ENCODE measurements at regions of chr16 and their contacts with region 1.

Region 1: GRCh38 chr16:31382485-31383161 is 10.5 kb upstream of the ITGAD start:
- DNase-seq: peak; percentile 81
- ATAC-seq: peak; percentile 55
- H3K4me3 Mint-ChIP-seq: no peak overlapping the region
- H3K27ac Mint-ChIP-seq: no peak overlapping the region
- H3K4me1 Mint-ChIP-seq: peaks cover 25% of the 10 kb centered on the region
- H3K27me3 Mint-ChIP-seq: peaks cover 3% of the 10 kb centered on the region
- CTCF ChIP-seq: peak; percentile 91

Region 2: DNA sequence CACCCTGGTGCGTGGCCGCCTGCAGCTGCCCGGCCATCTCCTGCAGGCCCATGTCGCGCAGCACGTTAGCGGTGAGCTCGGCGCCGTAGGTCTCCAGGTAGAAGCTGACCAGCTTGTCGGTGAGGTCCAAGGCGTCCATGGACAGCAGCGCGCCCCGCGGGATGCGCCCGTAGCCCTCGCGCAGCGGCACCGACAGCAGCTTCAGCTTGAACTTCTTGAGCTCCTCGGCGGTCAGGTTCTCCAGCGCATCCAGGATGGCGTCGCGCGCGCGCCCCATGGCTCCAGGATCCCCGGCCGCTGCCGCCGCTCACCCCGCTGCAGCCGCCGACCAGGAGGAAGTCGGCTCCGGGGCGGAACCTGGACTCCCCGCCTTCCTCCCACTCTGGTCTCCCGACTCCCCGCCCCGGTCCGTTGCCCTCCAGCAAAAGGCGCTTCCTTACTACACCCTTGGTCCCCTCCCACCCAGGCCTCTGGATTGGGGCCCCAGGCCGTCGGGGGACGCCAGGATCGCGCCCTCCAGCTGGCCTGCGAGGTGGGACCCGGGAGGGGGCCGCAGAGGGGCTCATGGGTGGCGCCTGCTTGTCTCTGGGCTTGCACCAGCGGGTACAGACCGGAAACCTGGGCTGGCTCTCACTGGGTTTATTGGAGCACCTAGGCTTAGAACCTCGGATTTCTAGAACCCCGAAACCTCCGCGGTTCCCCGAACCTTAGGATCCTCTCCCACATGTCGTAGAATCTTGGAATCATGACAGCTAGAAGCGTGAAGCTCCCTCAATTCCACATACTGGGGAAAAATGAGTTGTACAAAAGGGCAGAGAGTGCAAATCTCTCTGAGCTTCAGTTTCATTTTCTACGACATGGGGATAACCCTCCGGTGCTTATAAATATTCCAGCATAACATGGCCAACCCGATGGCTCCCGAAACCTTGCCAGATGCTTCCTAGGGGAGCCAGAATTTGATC is 179.9 kb before region 1 on chr16 and contains the start of gene PYCARD:
- CTCF ChIA-PET with region 1: interaction called, 12 read pairs
- POLR2A ChIA-PET with region 1: interaction called, 6 read pairs
- intact Hi-C with region 1: no loop called
- DNase-seq: peak; percentile 45
- ATAC-seq: peak; percentile 24
- H3K4me3 Mint-ChIP-seq: peak within 1 kb of the TSS; percentile 75
- H3K27ac Mint-ChIP-seq: peak within 1 kb of the TSS; percentile 47
- H3K4me1 Mint-ChIP-seq: peaks cover 40% of the 10 kb centered on the region
- H3K27me3 Mint-ChIP-seq: no peaks in the 10 kb centered on the region
- CTCF ChIP-seq: no peak
- total RNA-seq, gene PYCARD: 5.9 to 6.1 TPM

Region 3: GRCh38 chr16:31215287-31216162 is 167.1 kb before region 1 on chr16:
- CTCF ChIA-PET with region 1: interaction called, 10 read pairs
- POLR2A ChIA-PET with region 1: no interaction called
- intact Hi-C with region 1: no loop called
- DNase-seq: peak; percentile 52
- ATAC-seq: peak; percentile 66
- H3K4me3 Mint-ChIP-seq: peak overlapping the region; percentile 42
- H3K27ac Mint-ChIP-seq: no peak overlapping the region
- H3K4me1 Mint-ChIP-seq: peaks cover 22% of the 10 kb centered on the region
- H3K27me3 Mint-ChIP-seq: peaks cover 41% of the 10 kb centered on the region
- CTCF ChIP-seq: no peak

Region 4: DNA sequence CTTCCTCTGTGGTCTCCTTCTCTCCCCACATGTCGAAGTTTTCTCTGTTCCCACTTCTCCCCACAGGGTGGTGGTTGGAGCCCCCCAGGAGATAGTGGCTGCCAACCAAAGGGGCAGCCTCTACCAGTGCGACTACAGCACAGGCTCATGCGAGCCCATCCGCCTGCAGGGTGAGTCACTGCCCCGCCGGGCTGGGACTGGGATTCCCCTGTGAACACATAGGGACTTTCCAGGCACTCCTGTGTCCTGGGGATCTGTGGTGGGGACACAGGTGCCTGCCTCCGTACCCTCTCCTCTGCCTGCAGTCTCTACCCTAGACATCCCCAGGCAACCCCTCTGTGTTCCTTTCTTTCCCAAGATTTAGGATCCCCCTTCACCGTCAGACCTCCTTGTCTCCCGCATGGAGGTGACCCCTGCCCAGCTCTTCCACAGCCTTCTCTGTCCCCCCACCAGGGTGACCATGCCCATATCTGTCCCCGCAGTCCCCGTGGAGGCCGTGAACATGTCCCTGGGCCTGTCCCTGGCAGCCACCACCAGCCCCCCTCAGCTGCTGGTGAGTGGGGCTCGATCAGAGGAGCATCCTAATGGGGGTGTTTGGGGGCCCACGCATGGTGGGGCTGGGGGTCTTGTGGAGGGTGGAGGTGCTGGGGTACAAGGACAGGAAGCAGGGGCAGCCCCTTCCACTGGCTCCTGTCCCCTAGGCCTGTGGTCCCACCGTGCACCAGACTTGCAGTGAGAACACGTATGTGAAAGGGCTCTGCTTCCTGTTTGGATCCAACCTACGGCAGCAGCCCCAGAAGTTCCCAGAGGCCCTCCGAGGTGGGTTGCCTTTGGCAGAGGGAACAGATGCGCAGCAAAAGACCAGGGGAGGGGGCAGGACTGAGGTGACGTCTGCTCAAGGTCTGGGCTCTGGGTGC is 117.0 kb before region 1 on chr16:
- CTCF ChIA-PET with region 1: interaction called, 6 read pairs
- POLR2A ChIA-PET with region 1: no interaction called
- intact Hi-C with region 1: loop called (anchors 10 kb)
- DNase-seq: peak; percentile 92
- ATAC-seq: peak; percentile 97
- H3K4me3 Mint-ChIP-seq: no peak overlapping the region
- H3K27ac Mint-ChIP-seq: peak overlapping the region; percentile 80
- H3K4me1 Mint-ChIP-seq: peaks cover 34% of the 10 kb centered on the region
- H3K27me3 Mint-ChIP-seq: no peaks in the 10 kb centered on the region
- CTCF ChIP-seq: no peak

Region 5: DNA sequence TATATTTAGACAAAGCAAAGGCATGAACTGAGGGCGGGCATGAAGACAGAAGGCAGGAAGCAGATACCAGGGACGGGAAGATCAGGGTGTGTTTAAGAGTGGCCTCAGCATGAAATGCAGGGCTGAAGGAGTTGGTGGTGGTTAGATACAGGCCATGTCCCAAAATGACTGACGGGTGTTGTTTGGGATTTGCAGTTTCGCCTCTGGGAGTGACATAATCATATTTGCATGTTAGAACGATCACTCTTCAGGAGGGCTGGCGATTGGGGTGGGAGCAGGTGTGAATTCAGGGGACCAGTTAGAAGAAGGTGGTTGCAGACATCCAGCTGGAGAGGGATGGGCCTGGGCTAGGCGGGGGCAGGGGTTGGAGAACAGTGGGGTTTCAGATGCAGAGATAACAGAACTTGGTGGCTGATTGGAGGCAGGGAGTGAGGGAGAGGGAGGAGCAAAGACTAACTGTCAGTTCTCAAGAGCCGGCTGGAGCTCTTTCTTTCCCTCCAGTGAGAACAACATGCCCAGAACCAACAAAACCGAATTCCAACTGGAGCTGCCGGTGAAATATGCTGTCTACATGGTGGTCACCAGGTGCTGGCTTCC is 54.9 kb before region 1 on chr16:
- CTCF ChIA-PET with region 1: no interaction called
- POLR2A ChIA-PET with region 1: no interaction called
- intact Hi-C with region 1: no loop called
- DNase-seq: no peak
- ATAC-seq: no peak
- H3K4me3 Mint-ChIP-seq: no peak overlapping the region
- H3K27ac Mint-ChIP-seq: no peak overlapping the region
- H3K4me1 Mint-ChIP-seq: peaks cover 14% of the 10 kb centered on the region
- H3K27me3 Mint-ChIP-seq: peaks cover 2% of the 10 kb centered on the region
- CTCF ChIP-seq: no peak

Region 6: DNA sequence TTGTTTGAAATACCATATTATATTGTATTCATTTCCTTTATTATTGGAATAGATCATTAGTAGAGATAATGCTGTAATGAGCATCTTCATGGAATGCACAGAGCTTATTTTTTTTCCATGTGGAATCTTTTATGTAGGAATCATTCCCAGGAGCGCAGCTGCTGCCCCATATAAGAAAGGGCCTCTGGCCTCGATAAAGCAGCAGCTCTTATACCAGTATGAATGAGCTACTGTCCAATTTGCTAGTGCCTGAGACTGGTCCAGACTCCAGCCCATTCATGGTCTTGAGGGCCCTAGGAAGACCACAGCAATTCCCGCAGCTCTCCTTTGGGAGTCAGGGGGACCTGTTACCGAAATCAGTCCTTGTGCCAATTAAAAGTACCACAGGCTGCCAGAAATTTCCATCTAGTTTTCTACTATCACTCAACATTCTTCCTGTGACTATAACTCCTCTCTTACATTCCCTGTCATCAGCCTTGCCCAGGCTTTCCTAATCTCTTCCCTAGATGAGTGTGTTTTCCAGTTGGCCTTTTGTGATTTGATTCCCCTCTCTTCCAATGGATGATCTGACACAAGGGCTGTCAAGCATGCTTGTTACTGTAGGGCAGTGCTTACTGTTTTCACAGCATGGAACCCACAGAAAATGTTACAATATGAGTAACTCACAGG is 58.0 kb after region 1 on chr16:
- CTCF ChIA-PET with region 1: interaction called, 15 read pairs
- POLR2A ChIA-PET with region 1: interaction called, 4 read pairs
- intact Hi-C with region 1: loop called (anchors 10 kb)
- DNase-seq: no peak
- ATAC-seq: no peak
- H3K4me3 Mint-ChIP-seq: no peak overlapping the region
- H3K27ac Mint-ChIP-seq: no peak overlapping the region
- H3K4me1 Mint-ChIP-seq: peaks cover 19% of the 10 kb centered on the region
- H3K27me3 Mint-ChIP-seq: peaks cover 6% of the 10 kb centered on the region
- CTCF ChIP-seq: no peak

Region 7: GRCh38 chr16:31466886-31467773 is 84.5 kb after region 1 on chr16:
- CTCF ChIA-PET with region 1: no interaction called
- POLR2A ChIA-PET with region 1: no interaction called
- intact Hi-C with region 1: no loop called
- DNase-seq: no peak
- ATAC-seq: peak; percentile 46
- H3K4me3 Mint-ChIP-seq: no peak overlapping the region
- H3K27ac Mint-ChIP-seq: peak overlapping the region; percentile 83
- H3K4me1 Mint-ChIP-seq: peaks cover 12% of the 10 kb centered on the region
- H3K27me3 Mint-ChIP-seq: peaks cover 7% of the 10 kb centered on the region
- CTCF ChIP-seq: no peak

Measured in activated CD8-positive, alpha-beta T cell treated with anti-CD3 and anti-CD28 coated beads for 36 hours (primary cell).